ENCODE measurements at regions of chr9 and their contacts with region 1.

Region 1: GRCh38 chr9:129177791-129178559 is at the start of gene IER5L:
- DNase-seq: no peak
- H3K4me3 ChIP-seq: peak within 1 kb of the TSS; percentile 95
- H3K27me3 ChIP-seq: no peaks in the 10 kb centered on the region
- CTCF ChIP-seq: no peak
- polyA plus RNA-seq, gene IER5L: 7.3 and 8.7 TPM in 2 replicates

Region 2: GRCh38 chr9:129164246-129164930 is 13.6 kb before region 1 on chr9:
- CTCF ChIA-PET with region 1: interaction called, 16 read pairs
- POLR2A ChIA-PET with region 1: interaction called, 5 read pairs
- DNase-seq: no peak
- H3K4me3 ChIP-seq: no peak overlapping the region
- H3K27me3 ChIP-seq: no peaks in the 10 kb centered on the region
- CTCF ChIP-seq: no peak

Region 3: GRCh38 chr9:129333953-129334724 is 156.2 kb after region 1 on chr9:
- CTCF ChIA-PET with region 1: interaction called, 21 read pairs
- POLR2A ChIA-PET with region 1: interaction called, 11 read pairs
- DNase-seq: peak; percentile 83
- H3K4me3 ChIP-seq: no peak overlapping the region
- H3K27me3 ChIP-seq: no peaks in the 10 kb centered on the region
- CTCF ChIP-seq: no peak; the same call in 1 of the 2 replicates

Region 4: GRCh38 chr9:129482521-129483414 is 304.8 kb after region 1 on chr9:
- CTCF ChIA-PET with region 1: interaction called, 32 read pairs
- POLR2A ChIA-PET with region 1: interaction called, 4 read pairs
- DNase-seq: peak; percentile 48
- H3K4me3 ChIP-seq: peak overlapping the region; percentile 20; the same call in 1 of the 2 replicates
- H3K27me3 ChIP-seq: no peaks in the 10 kb centered on the region
- CTCF ChIP-seq: peak; percentile 19; the same call in 1 of the 2 replicates

Region 5: DNA sequence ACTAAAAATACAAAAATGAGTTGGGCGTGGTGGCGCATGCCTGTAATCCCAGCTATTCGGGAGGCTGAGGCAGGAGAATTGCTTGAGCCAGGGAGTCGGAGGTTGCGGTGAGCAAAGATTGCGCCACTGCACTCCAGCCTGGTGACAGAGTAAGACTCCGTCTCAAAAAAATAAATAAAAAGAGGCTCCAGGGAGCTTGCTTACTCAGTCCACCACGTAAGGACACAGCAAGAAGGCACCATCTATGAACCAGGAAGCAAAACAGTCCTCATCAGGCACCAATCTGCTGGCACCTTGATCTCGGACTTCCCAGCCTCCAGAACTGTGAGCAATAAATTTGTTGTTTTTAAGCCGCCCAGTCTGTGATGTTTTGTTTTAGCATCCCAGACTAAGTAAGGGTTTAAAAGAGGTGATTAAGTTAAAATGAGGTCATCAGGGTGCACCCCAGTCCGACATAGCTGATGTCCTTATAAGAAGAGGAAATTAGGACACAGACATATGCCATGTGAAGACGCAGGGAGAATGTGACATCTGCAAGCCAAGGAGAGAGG is 397.0 kb after region 1 on chr9:
- CTCF ChIA-PET with region 1: interaction called, 8 read pairs
- POLR2A ChIA-PET with region 1: interaction called, 13 read pairs
- DNase-seq: no peak
- H3K4me3 ChIP-seq: no peak overlapping the region
- H3K27me3 ChIP-seq: no peaks in the 10 kb centered on the region
- CTCF ChIP-seq: no peak

Region 6: GRCh38 chr9:129626079-129626624 is 448.2 kb after region 1 on chr9 and contains the start of gene NTMT1:
- CTCF ChIA-PET with region 1: interaction called, 26 read pairs
- POLR2A ChIA-PET with region 1: no interaction called
- DNase-seq: no peak
- H3K4me3 ChIP-seq: peak within 1 kb of the TSS; percentile 88
- H3K27me3 ChIP-seq: no peaks in the 10 kb centered on the region
- CTCF ChIP-seq: no peak
- polyA plus RNA-seq, gene NTMT1: 77.1 and 96.3 TPM in 2 replicates

Measured in BJ (cell line).